ENCODE measurements at regions of chr22 and their contacts with region 1.

Region 1: DNA sequence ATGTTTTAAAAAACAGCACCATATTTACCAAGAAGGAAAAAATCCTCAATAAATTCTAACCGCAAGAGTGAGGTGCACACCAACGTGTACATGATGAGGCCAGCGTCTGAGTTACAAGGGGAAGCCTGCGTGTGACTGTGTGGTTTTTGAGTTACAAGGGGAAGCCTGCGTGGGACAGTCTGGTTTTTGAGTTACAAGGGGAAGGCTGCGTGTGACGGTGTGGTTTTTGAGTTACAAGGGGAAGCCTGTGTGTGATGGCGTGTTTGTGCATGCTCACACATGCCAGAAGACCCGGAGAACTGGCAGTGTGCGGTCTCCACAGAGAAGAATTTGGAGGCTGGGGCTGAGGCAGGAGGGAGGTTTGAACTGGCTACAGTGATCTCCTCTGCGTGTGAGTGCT is 1376.4 kb downstream of the TBC1D22A start:
- DNase-seq: no peak
- H3K4me3 ChIP-seq: no peak overlapping the region
- CTCF ChIP-seq: no peak

Region 2: GRCh38 chr22:47370448-47371262 is 768.2 kb before region 1 on chr22:
- in situ Hi-C with region 1: no loop called
- DNase-seq: no peak
- H3K4me3 ChIP-seq: no peak overlapping the region
- CTCF ChIP-seq: no peak

Region 3: DNA sequence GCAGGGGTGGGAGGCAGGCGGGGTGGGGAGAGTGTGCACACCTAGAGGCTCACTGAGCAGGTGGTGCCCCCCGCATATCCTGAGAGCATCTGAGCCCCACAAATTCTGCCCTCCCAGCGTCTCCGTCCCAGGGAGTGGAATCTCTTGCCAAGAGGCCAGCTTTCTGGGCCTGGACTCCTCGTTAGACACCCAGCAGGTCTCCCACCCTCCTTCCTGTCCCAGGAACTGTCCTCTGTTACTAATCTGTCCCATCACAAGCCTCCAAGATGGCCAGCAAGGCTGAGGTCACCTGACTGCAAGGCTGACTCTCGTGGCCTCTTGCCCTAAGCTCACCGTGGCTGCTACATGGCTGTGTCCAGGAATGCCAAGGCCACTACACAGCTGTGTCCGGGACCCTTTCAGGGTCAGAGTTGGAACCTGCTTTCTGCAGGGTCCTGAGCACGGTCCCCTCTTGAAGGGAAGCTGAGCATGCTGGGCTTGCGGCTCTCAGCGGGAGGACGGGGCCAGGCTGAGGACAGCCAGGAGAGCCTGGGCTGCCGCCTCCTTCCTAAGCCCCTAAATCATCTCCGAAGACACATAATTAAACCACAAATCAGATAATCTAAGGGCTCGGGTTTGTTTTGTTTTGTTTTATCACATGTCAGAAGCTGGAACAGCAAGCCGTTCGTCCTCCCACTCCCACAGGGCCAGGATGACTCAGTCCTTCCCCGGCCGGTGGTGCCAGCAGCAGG is 49.1 kb before region 1 on chr22:
- in situ Hi-C with region 1: loop called (anchors 5 kb)
- DNase-seq: no peak
- H3K4me3 ChIP-seq: no peak overlapping the region
- CTCF ChIP-seq: no peak